Activated CD4-positive, alpha-beta T cell treated with anti-CD3 and anti-CD28 coated beads, Interleukin-2, amount 10 ng/mL, durations not matched to agents 24 days and 14 days (primary cell): ENCODE measurements at regions of chr16 and their contacts with region 1.

Region 1: DNA sequence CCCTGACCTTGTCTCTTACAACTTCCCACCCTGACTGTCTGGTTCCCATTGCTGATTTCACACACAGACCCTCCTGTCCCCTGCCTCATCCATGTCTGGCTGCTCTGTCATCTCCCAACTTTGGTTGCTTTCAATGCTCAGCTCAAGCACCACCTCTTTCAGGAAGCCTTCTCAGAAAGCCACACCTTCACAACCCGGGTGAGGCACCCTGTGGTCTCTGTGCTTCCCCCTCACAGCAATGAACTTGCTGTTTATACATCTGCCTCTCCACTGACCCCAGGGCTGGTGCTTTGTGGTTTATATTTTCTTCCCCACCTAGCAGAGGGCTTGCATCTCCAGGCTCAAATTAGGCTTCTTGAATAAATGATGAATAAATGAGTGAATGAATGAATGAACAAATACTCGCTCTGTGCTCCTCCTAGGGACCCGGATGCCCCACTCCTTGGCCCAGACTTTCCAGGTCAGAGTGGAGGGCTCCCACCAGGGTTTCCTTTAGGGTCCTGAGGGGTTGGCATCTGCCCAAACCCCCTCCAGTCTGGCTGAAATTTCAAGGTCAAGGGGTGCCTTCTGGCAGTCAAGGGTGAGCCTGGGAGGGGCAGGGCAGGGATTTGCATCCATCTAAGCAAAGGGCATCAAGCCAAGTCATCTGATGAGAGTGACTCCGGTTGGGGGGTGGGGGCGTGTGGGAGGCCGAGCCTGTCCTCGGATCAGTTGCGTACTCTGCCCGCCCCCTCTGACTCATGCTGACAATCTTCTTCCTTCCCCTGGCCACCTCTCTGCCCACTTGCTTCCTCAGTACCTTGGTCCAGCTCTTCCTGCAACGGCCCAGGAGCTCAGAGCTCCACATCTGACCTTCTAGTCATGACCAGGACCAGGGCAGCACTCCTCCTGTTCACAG is at the start of gene ITGAX:
- DNase-seq: peak; percentile 92
- H3K4me3 Mint-ChIP-seq: peak within 1 kb of the TSS; percentile 91
- H3K27ac Mint-ChIP-seq: peak within 1 kb of the TSS; percentile 95
- H3K4me1 Mint-ChIP-seq: peaks cover 56% of the 10 kb centered on the region
- H3K27me3 Mint-ChIP-seq: no peaks in the 10 kb centered on the region
- total RNA-seq, gene ITGAX: 44.3 and 45.9 TPM in 2 replicates

Region 2: GRCh38 chr16:31386157-31386984 is 31.7 kb after region 1 on chr16:
- intact Hi-C with region 1: loop called (anchors 1 kb)
- DNase-seq: peak; percentile 64
- H3K4me3 Mint-ChIP-seq: peak overlapping the region; percentile 6
- H3K27ac Mint-ChIP-seq: peak overlapping the region; percentile 77
- H3K4me1 Mint-ChIP-seq: peaks cover 30% of the 10 kb centered on the region
- H3K27me3 Mint-ChIP-seq: peaks cover 15% of the 10 kb centered on the region

Region 3: DNA sequence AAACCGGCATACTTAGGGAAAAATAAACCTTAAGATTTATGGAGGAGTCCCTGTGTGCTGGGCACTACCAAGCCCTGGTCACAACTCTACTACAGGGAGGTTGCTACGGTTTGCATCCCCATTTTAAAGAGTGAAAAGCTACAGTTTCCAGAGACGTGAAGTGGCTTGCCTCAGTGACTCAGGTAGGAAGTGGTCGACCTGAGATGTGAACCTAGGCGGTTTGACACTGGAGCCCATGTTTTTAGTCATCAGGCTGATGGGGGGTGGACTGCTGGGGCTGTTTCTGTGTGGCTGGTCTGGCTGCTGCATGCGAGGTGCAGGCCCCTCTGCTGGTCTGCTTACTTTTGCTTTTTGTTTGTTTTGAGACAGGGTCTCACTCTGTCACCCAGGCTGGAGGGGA is 66.9 kb after region 1 on chr16:
- intact Hi-C with region 1: loop called (anchors 2 kb)
- DNase-seq: peak; percentile 87
- H3K4me3 Mint-ChIP-seq: peak overlapping the region; percentile 58
- H3K27ac Mint-ChIP-seq: peak overlapping the region; percentile 83
- H3K4me1 Mint-ChIP-seq: peaks cover 40% of the 10 kb centered on the region
- H3K27me3 Mint-ChIP-seq: no peaks in the 10 kb centered on the region

Region 4: DNA sequence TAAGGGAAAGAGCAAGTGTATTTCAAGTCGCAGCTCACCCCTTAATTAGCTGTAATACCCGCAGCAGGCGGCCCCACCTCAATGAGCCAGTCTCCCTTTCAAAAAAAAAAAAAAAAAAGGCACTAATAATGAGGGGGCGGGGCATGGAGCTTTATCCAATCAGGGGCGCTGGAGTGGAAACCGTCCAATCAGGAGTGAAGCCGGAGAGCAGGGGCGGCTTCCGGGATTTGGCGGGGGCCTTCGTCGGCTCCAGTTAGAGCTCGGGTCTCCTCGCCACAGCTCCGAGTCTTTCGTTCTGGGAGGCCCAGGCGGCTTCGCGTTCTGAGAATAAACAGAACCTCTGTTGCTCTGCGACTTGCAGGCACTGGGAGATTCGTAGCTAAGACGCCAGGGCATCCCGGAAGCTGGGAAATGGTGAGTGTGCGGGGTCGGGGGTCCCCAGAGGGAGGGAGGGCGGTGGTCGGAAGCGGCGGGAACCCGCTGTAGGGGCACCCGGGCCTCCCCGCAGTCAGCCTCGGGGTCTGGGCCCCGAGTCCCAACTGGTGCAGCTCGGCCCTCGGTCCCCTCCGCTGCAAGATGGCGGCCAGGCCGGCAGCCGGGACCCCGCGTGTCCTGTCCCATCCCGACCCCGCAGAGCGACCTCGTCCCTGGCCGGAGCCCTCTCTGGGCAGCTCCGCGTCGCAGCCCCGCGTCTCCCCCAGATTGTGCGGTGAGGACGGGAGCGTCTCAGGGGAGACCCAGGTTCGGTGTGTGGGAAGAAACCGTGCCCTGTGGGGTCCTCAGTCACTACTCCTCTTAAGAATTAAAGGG is 519.1 kb after region 1 on chr16 and contains the start of gene ZNF267:
- intact Hi-C with region 1: loop called (anchors 10 kb)
- DNase-seq: peak; percentile 98
- H3K4me3 Mint-ChIP-seq: peak within 1 kb of the TSS; percentile 90
- H3K27ac Mint-ChIP-seq: peak within 1 kb of the TSS; percentile 94
- H3K4me1 Mint-ChIP-seq: peaks cover 66% of the 10 kb centered on the region
- H3K27me3 Mint-ChIP-seq: no peaks in the 10 kb centered on the region
- total RNA-seq, gene ZNF267: 77.7 and 78.3 TPM in 2 replicates